ENCODE measurements at regions of chr20 and their contacts with region 1.

Region 1: GRCh38 chr20:49186535-49187329 is 1.4 kb downstream of the STAU1 start:
- DNase-seq: peak; percentile 52

Region 2: GRCh38 chr20:49132995-49133478 is 53.7 kb before region 1 on chr20:
- in situ Hi-C with region 1: loop called (anchors 10 kb)
- DNase-seq: peak; percentile 82